Dorsolateral prefrontal cortex (tissue), 120 donors: ENCODE measurements at regions of chr14 and their contacts with region 1.

Region 1: DNA sequence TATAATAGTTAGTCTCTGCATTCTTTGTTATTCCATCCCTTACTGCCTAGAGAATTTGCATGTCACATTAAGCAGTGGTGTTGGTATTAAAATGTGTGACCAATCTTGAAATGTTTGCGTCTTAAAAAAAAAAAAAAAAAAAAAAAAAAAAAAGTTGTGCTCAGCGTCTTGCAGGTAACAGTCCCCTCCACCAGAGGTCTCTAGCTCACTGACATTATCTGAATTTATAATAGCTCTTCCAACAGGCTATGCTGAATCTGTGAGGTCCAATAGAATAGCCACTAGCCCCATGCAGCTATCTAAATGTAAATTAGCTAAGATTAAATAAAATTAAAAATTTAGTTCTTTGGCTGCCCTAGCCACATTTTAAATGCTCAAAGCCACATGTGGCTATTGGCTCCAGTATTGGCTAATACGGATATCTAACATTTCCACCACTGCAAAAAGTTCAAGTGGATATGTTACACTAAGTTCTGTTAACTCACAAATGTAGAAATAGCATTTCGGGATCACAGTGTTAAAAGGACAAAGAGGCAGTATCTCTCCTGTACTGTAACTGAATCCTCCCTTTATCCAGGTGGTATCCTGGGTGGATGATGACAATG is 28.7 kb downstream of the NKX2-8 start:
- DNase-seq: no peak
- H3K4me3 ChIP-seq: no peak overlapping the region
- H3K27ac ChIP-seq: no peak overlapping the region
- H3K27me3 ChIP-seq: peaks cover 0 to 16% (median 0%) of the 10 kb centered on the region in 45 donors
- CTCF ChIP-seq: peak; percentile 13 to 80 (median 66)

Region 2: GRCh38 chr14:36604757-36605505 is 51.2 kb after region 1 on chr14:
- intact Hi-C with region 1: loop called in 1 of 2 experiments (anchors 5 kb)
- DNase-seq: peak in 4 of 10 donors; percentile 14 to 62 (median 36)
- H3K4me3 ChIP-seq: no peak overlapping the region
- H3K27ac ChIP-seq: no peak overlapping the region
- H3K27me3 ChIP-seq: peaks cover 0 to 52% (median 9%) of the 10 kb centered on the region in 45 donors
- CTCF ChIP-seq: peak; percentile 60 to 87 (median 78)

Region 3: DNA sequence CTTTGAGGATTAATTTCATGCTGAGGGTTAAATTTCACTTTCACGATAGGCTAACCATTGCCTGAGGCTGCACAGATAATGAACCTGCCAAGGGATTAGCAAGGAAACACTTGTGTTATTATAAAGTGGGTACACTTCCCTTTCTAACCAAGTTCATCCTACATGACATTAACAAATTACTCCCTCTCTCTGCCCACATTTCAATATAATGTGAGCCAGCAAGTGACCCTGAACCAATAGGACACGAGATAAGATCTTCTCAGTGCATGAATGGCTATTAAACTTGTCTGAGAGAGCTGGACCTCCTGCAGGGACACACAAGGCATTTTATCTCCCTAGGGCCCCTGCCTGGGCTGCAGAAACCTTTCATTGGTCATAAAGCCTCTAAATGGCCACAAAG is 281.4 kb after region 1 on chr14:
- intact Hi-C with region 1: no loop called
- DNase-seq: no peak
- H3K4me3 ChIP-seq: no peak overlapping the region
- H3K27ac ChIP-seq: no peak overlapping the region
- H3K27me3 ChIP-seq: peaks cover 0 to 17% (median 0%) of the 10 kb centered on the region in 45 donors
- CTCF ChIP-seq: no peak